Endothelial cell of umbilical vein (primary cell): ENCODE measurements at regions of chr7 and their contacts with region 1.

Region 1: GRCh38 chr7:112080441-112080840 is 125.8 kb downstream of the DOCK4 start:
- DNase-seq: peak; percentile 85
- H3K4me3 ChIP-seq: peak overlapping the region in 1 of 3 experiments; percentile 36
- H3K27ac ChIP-seq: peak overlapping the region; percentile 95
- H3K4me1 ChIP-seq: peaks cover 46% of the 10 kb centered on the region
- H3K27me3 ChIP-seq: no peaks in the 10 kb centered on the region
- CTCF ChIP-seq: no peak
- POLR2A ChIP-seq: no peak

Region 2: GRCh38 chr7:111958896-111959295 is 121.5 kb before region 1 on chr7:
- CTCF ChIA-PET with region 1: no interaction called
- POLR2A ChIA-PET with region 1: no interaction called
- dilution Hi-C with region 1: no loop called
- intact Hi-C with region 1: no loop called
- DNase-seq: peak; percentile 85
- H3K4me3 ChIP-seq: no peak overlapping the region
- H3K27ac ChIP-seq: peak overlapping the region; percentile 68
- H3K4me1 ChIP-seq: peaks cover 15% of the 10 kb centered on the region
- H3K27me3 ChIP-seq: no peaks in the 10 kb centered on the region
- CTCF ChIP-seq: no peak
- POLR2A ChIP-seq: no peak

Region 3: DNA sequence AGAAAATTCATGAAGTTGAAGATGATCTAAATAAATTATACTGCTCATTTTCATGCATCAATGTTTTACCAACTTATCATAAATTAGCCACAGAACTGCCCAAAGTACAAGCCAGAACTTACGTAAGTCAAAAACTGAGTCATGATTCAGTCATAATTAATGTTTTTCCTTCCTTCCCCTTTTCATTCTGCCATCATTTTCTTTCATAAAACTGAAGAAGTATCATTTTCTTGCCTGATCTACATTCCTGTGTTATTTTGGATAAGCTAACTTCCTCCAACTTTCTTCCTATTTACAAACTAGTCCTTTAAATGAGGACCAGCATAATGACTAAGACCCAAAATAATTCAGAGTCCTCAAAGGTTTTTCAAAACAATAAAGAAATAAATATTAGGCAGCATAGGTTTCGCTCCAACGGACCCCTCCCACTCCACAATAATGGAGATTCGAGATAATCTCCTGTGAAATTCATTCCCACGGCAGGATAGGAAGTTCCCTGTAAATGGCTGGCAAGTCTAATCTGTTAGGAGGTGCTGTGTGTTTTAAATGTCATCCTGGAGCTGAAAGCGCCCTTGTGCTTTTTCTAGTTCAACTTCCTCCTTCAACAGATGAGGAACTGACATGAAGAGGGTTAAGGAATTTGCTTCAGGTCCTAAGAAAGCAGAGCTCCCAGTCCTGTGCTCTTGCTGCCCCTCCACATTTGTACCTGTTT is 93.2 kb before region 1 on chr7:
- CTCF ChIA-PET with region 1: interaction called, 3 read pairs
- POLR2A ChIA-PET with region 1: no interaction called
- dilution Hi-C with region 1: no loop called
- intact Hi-C with region 1: loop called (anchors 1 kb)
- DNase-seq: peak; percentile 83
- H3K4me3 ChIP-seq: peak overlapping the region in 1 of 3 experiments; percentile 45
- H3K27ac ChIP-seq: peak overlapping the region; percentile 89
- H3K4me1 ChIP-seq: peaks cover 30% of the 10 kb centered on the region
- H3K27me3 ChIP-seq: no peaks in the 10 kb centered on the region
- CTCF ChIP-seq: no peak
- POLR2A ChIP-seq: no peak

Region 4: DNA sequence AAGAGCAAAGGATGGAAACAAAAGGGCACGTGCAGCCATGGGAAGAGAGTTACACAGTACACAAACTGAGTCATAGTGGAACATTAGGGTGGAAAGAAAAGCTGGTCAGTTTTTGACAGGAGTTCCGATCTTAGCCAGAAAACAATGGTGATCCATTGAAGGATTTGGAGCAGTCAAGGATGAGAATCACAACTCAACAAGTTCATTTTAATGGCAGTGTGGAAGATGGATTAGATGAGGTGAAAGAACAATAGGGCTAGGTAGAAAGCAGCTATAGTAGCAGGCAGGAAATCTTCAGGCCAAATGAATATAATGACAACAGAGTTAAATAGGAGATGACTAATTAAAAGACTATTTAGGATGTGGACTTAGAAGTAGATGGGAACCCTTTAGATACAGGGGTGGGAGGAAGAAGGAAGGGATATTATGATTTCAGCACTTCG is 10.5 kb before region 1 on chr7:
- CTCF ChIA-PET with region 1: interaction called, 16 read pairs
- POLR2A ChIA-PET with region 1: no interaction called
- dilution Hi-C with region 1: no loop called
- intact Hi-C with region 1: no loop called
- DNase-seq: peak; percentile 72
- H3K4me3 ChIP-seq: no peak overlapping the region
- H3K27ac ChIP-seq: no peak overlapping the region
- H3K4me1 ChIP-seq: peaks cover 39% of the 10 kb centered on the region
- H3K27me3 ChIP-seq: no peaks in the 10 kb centered on the region
- CTCF ChIP-seq: no peak
- POLR2A ChIP-seq: no peak

Region 5: GRCh38 chr7:112162142-112163020 is 81.9 kb after region 1 on chr7:
- CTCF ChIA-PET with region 1: interaction called, 8 read pairs
- POLR2A ChIA-PET with region 1: interaction called, 3 read pairs
- dilution Hi-C with region 1: no loop called
- intact Hi-C with region 1: loop called (anchors 1 kb)
- DNase-seq: peak; percentile 98
- H3K4me3 ChIP-seq: peak overlapping the region in 1 of 3 experiments; percentile 13
- H3K27ac ChIP-seq: peak overlapping the region; percentile 81
- H3K4me1 ChIP-seq: peaks cover 70% of the 10 kb centered on the region
- H3K27me3 ChIP-seq: no peaks in the 10 kb centered on the region
- CTCF ChIP-seq: no peak
- POLR2A ChIP-seq: no peak

Region 6: DNA sequence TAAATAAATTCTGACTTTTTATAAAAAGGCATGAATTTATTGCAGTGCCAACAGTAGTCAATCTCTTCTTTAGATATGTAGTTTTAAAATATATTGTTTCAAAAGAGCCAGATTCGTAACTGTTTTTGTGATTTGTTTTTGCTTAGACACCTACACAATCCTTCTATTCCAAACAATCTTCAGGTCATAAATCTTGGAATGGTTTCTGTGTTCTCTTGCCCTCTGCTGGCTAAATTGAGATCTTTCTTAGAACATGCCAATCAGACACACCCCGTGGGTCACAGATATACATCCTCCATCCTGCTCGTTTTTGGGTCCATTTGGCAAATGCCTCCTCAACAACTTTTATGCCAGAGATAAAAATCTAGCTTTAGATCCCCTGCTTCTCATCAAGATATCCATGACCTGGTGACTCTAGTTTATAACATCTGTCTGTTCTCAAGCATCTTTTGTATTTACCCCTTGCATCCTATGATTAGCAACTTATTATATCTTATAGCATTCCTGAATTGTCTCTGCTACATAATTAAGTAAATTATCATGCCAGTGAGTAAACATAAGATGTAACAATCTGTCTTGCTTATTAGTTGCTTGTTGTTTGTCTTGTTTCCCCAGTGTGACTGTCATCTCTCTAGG is 334.5 kb after region 1 on chr7:
- CTCF ChIA-PET with region 1: interaction called, 3 read pairs
- POLR2A ChIA-PET with region 1: no interaction called
- dilution Hi-C with region 1: no loop called
- intact Hi-C with region 1: loop called (anchors 5 kb)
- DNase-seq: peak; percentile 63
- H3K4me3 ChIP-seq: no peak overlapping the region
- H3K27ac ChIP-seq: no peak overlapping the region
- H3K4me1 ChIP-seq: no peaks in the 10 kb centered on the region
- H3K27me3 ChIP-seq: no peaks in the 10 kb centered on the region
- CTCF ChIP-seq: peak; percentile 54 to 64
- POLR2A ChIP-seq: no peak